OCI-LY7 (cell line): ENCODE measurements at regions of chr12 and their contacts with region 1.

Region 1: DNA sequence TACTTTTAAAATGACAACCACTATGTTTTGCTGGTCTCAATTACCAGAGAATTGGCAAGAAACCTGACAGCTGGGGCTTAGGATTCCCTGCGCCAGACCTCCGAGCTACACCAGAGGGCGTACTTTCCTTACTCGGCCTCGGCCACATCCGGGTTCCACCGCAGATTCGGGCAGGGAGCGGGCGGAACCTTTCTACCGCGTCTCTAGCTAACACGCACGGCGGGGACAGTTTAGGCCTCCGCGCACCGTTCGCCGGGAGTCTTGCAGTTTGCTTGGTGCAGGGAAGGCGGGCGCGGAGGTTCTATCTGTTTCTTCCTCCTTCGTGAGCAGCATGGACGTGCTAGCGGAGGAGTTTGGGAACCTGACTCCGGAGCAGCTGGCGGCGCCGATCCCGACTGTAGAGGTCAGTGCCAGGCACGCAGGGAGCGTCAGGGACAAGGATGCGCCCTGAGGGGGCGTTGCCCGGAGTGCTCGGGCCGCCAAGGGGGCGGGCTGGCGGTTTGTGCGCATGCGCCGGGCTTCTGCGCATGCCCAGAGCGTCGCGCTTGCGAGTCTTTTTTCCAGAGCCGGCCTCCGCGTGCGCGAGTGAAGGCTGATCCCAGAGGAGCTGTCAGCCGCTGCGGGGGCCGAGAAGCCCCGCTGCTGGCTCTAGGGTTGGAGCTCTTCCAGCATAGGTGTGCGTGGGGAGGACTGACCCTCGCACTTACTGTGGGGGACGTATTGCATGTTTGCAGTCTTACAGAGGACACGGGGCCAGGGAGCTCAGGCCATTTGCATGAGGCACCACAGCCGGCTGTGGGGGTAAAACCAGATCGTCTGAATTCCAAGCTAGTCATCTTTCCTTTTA is at the start of gene POLR3B:
- DNase-seq: peak; percentile 97
- H3K4me3 ChIP-seq: peak within 1 kb of the TSS; percentile 80
- H3K27ac ChIP-seq: peak within 1 kb of the TSS; percentile 62
- H3K4me1 ChIP-seq: peaks cover 12% of the 10 kb centered on the region
- CTCF ChIP-seq: peak; percentile 89
- total RNA-seq, gene POLR3B: 14.7 and 18.1 TPM in 2 replicates

Region 2: GRCh38 chr12:106010741-106011140 is 347.0 kb before region 1 on chr12:
- CTCF ChIA-PET with region 1: no interaction called
- POLR2A ChIA-PET with region 1: no interaction called
- intact Hi-C with region 1: no loop called
- DNase-seq: no peak
- H3K4me3 ChIP-seq: no peak overlapping the region
- H3K27ac ChIP-seq: no peak overlapping the region
- H3K4me1 ChIP-seq: no peaks in the 10 kb centered on the region
- CTCF ChIP-seq: no peak

Region 3: DNA sequence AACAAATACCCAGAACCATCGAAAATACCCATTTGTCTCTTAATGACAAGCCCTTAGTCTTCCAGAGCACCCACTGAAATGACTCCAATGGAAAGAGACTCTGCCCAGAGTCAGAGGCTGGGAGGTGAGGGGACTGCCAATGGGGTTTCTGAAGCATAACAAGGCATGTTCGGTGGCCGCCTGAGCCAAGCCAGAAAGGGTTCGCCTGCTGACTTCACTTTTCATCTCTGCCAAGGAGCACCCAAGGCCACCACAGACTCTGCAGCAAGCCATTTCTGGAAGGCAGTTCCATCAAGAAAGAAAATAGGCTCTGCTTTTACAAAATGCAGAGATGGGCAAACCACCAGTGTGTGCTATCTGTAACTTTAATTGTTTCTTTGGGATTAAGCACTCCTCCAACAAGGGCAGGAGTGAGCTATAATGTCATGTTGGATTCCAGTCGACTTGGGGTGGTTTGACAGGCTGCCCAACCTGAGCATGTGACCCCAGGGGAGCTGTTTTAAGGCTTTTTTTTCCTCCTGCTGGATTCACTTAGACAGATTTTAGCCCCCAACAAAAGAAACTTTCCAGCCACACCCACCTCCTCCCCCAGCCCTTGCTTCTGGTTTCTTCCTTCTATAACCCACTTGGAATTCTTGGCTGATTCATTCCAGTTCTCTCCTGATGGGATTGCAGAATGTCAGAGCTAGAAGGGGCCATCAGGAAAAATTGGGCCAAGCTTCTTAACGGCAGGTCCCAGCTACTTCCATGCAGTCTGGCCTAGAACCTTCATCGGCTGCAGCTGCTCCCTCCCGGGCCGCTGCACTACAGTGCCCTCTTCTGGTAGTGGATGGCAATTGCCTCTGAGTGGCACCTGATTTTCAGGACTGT is 134.1 kb before region 1 on chr12:
- CTCF ChIA-PET with region 1: no interaction called
- POLR2A ChIA-PET with region 1: no interaction called
- intact Hi-C with region 1: loop called (anchors 5 kb)
- DNase-seq: peak; percentile 69
- H3K4me3 ChIP-seq: no peak overlapping the region
- H3K27ac ChIP-seq: no peak overlapping the region
- H3K4me1 ChIP-seq: peaks cover 11% of the 10 kb centered on the region
- CTCF ChIP-seq: peak; percentile 95

Region 4: DNA sequence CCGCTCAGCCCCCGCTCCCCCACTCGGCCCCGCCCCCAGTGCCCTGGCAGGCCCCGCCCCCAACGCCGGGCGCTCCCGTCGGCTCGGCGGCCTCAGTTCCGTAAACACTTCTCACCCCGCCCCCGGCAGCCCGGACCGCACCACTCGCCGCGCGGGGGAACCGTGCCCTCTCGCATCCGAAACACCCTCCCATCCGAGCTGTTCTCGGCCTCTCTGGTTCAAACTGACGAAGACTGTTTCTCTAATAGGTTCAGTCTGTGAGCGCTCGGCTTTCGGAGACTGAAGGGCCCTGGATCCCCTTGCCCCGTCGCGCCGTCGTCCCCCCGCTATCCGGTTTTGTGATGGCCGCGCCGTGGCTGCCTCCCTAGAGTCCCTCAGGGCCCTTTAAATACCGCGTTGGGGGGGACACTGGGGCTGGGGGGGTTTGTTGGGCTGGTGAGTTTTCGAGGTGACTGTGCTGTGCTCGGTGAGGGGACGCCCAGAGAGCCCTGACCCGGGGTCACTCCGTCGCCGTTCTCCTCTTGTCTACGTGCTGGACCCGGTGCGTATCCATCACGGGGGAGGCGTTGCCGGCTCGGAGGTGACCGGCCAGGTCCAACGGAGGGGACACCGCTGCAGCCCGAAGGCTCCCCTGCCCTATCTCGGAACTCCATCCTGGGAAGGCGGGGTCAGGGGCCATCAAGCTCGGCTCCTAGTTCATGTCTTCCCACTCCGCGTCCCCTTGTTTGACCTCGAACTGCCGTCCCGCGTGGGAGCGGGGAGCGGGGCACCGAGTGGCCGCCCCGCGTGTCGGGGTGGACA is 55.2 kb before region 1 on chr12 and contains the start of gene TCP11L2:
- CTCF ChIA-PET with region 1: interaction called, 5 read pairs
- POLR2A ChIA-PET with region 1: interaction called, 6 read pairs
- intact Hi-C with region 1: loop called (anchors 5 kb)
- DNase-seq: peak; percentile 89
- H3K4me3 ChIP-seq: peak within 1 kb of the TSS; percentile 95
- H3K27ac ChIP-seq: peak within 1 kb of the TSS; percentile 57
- H3K4me1 ChIP-seq: peaks cover 44% of the 10 kb centered on the region
- CTCF ChIP-seq: no peak
- total RNA-seq, gene TCP11L2: 1.2 and 1.8 TPM in 2 replicates

Region 5: DNA sequence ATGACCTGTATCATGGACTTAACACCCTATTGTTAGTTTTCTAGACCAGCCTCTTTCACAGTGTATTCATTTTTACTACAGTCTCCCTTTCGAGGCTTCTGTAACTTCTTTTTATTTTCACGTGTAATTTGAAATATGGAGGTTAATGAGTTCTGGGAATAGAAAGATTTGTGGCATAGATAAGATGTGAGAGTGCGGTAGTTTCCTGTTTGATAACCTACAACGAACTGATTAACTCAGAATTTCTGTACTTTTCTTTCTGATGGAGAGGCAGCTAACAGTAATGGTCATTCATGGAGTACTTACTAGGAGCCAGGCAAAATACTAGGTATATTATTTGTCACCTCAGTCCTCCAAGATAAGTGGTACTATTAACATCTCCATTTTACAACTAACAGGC is 21.0 kb after region 1 on chr12:
- CTCF ChIA-PET with region 1: interaction called, 3 read pairs
- POLR2A ChIA-PET with region 1: interaction called, 10 read pairs
- intact Hi-C with region 1: no loop called
- DNase-seq: no peak
- H3K4me3 ChIP-seq: no peak overlapping the region
- H3K27ac ChIP-seq: no peak overlapping the region
- H3K4me1 ChIP-seq: no peaks in the 10 kb centered on the region
- CTCF ChIP-seq: no peak

Region 6: DNA sequence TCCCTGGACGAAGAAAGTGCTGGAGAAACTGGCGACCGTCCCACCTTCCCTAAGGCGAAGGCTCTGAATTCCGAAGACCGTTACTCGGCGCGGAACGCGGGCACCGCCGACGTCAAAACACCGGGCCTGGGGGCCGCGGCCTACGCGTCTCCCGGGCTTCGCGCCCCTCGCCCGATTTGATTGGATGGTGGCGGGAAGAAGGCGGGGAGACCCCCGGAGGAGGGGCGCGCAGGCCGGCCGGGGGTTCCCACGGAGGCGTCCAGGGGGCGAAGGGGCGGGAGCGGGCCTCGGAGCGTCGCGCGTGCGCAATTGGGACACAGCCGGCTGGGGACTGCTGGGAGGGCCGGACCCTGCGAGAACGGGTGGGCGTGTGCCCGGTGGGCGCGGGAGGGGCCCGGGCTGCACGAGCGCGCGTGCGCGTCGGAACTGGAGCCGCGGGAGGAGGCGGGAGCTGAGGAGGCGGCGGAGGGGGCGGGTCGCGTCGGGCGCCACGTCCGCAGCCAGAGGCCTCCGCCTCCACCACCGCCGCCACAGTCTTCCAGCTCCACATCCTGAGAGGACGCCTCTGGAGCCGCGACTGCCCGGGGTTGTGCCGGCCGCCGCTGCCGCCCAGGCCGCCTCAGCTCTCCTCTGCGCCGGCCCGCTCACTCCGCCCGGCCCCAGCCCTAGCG is 597.7 kb after region 1 on chr12 and contains the start of gene TMEM263:
- CTCF ChIA-PET with region 1: interaction called, 5 read pairs
- POLR2A ChIA-PET with region 1: interaction called, 3 read pairs
- intact Hi-C with region 1: loop called (anchors 2 kb)
- DNase-seq: peak; percentile 95
- H3K4me3 ChIP-seq: peak within 1 kb of the TSS; percentile 80
- H3K27ac ChIP-seq: peak within 1 kb of the TSS; percentile 82
- H3K4me1 ChIP-seq: peaks cover 26% of the 10 kb centered on the region
- CTCF ChIP-seq: no peak
- total RNA-seq, gene TMEM263: 34.1 and 43.9 TPM in 2 replicates